ENCODE measurements at regions of chr17 and their contacts with region 1.

Region 1: DNA sequence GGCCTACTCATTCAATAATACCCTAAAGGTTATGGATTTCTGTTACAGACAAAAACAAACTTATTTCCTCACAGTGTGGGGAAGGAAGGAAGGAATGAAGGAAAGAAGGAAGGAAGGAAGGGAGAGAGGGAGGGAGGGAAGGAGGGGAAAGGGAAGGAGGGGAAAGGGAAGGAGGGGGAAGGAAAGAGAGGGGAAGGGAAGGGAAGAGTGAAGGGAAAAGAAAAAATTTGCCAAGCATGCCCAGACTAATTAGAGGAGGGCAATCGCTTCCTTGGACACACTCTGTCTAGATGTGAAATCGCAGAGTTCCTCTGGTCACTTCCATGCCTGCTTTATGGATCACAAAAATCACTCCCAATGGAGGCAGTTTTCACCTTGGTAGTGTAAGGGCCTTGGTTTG is 570.1 kb upstream of the SOX9 start:
- DNase-seq: no peak
- ATAC-seq: no peak
- H3K4me3 ChIP-seq: no peak overlapping the region
- H3K27ac ChIP-seq: no peak overlapping the region
- H3K4me1 ChIP-seq: peaks cover 3% of the 10 kb centered on the region; the same call in 1 of the 2 replicates
- H3K27me3 ChIP-seq: no peaks in the 10 kb centered on the region
- CTCF ChIP-seq: no peak
- POLR2A ChIP-seq: no peak
- RAD21 ChIP-seq: no peak

Region 2: GRCh38 chr17:71580220-71580619 is 29.5 kb after region 1 on chr17:
- CTCF ChIA-PET with region 1: no interaction called
- POLR2A ChIA-PET with region 1: no interaction called
- dilution Hi-C with region 1: no loop called
- in situ Hi-C with region 1: no loop called
- intact Hi-C with region 1: loop called (anchors 1 kb)
- DNase-seq: peak; percentile 20
- ATAC-seq: no peak; the same call in 1 of the 2 replicates
- H3K4me3 ChIP-seq: no peak overlapping the region
- H3K27ac ChIP-seq: no peak overlapping the region
- H3K4me1 ChIP-seq: no peaks in the 10 kb centered on the region
- H3K27me3 ChIP-seq: no peaks in the 10 kb centered on the region
- CTCF ChIP-seq: no peak
- POLR2A ChIP-seq: no peak
- RAD21 ChIP-seq: no peak